Lower leg skin (tissue), 4 donors: ENCODE measurements at regions of chr21 and their contacts with region 1.

Region 1: DNA sequence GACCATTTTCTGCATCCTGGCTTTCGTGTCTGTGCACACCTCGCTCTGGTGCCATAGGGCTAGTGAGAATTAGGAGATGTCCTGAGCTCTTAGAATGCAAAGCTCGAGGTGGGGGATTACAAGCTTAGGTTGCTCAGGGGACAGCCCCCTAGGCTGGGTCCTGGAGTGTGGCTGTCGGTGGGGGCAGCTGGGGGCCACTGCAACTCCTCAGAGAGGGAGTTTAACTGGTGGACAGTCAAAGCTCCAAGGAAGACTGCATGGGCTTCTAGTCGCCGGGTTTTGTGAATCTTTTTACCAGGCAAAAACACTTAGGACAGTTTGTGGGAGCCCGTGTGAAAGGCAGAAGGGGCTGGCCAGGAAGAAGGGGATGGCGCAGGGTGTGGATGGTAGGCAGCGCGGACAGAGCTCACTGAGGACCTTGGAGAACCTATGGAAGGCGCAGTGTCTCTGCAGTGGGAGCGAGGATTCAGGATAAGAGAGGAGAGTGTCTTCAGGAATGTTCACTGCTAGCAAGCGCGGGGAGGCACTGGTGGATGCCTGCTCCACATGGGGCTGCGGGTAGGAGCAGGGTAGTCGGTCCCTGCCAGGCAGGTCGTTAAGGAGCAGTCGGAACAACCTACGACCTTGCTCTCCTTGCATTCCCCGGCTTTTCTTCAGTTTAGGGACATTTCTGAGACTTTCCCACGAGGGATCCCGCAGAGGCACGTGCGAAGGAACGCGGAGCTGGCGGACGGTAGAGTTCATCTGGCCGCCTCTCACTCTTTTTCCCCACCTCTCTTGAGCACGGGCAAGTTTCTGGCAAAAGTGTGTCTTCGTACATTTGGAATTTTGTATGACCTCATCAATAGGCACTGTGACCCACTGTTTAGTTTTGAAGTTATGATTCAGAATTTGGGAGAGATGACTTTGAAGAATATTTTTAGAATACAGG is 12.9 kb upstream of the KCNE1 start:
- DNase-seq: no peak
- H3K4me3 ChIP-seq: no peak overlapping the region
- CTCF ChIP-seq: no peak
- POLR2A ChIP-seq: no peak

Region 2: DNA sequence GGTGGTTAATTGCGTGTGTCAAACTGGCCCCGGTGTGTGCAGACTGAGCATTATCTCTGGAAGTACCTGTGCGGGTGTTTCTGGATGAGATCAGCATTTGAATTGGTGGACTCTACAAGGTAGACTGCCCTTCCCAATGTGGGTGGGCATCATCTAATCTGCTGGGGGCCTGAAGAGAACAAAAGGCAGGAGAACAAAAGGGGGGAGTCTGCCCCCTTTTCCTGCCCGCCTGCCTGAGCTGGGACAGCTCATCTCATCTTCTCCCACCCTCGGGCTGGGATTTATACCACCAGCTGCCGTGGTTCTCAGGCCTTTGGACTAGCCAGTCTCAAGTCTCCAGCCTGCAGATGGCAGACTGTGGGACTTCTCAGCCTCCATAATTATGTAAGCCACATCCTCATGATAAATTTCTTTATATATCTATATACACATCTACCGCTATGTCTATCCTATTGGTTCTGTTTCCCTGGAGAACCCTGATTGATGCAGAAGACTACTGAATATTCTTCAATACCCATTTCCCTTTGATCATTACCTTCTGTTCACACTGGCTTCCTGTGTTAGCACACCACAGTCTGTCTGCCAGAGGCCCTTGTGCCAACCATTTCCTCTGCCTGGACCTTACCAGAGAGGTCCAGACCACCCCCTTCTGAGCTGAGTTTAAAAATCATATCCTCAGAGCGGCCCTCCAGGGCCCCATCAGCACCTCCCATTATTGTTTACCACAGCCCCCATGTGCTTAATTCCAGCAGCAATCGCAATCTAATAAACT is 64.8 kb after region 1 on chr21:
- intact Hi-C with region 1: loop called (anchors 5 kb)
- DNase-seq: no peak
- H3K4me3 ChIP-seq: no peak overlapping the region
- CTCF ChIP-seq: no peak
- POLR2A ChIP-seq: no peak